ENCODE measurements at regions of chr6 and their contacts with region 1.

Region 1: GRCh38 chr6:36302227-36302976 is 32.5 kb downstream of the PNPLA1 start:
- DNase-seq: peak; percentile 91
- H3K4me3 ChIP-seq: no peak overlapping the region
- H3K27ac ChIP-seq: no peak overlapping the region
- H3K4me1 ChIP-seq: no peaks in the 10 kb centered on the region
- H3K27me3 ChIP-seq: no peaks in the 10 kb centered on the region
- CTCF ChIP-seq: peak; percentile 98

Region 2: GRCh38 chr6:36360241-36361054 is 58.0 kb after region 1 on chr6:
- CTCF ChIA-PET with region 1: interaction called, 10 read pairs
- POLR2A ChIA-PET with region 1: no interaction called
- intact Hi-C with region 1: loop called (anchors 1 kb)
- DNase-seq: peak; percentile 87
- H3K4me3 ChIP-seq: no peak overlapping the region
- H3K27ac ChIP-seq: no peak overlapping the region
- H3K4me1 ChIP-seq: no peaks in the 10 kb centered on the region
- H3K27me3 ChIP-seq: no peaks in the 10 kb centered on the region
- CTCF ChIP-seq: peak; percentile 85

Measured in A673 (cell line).